Activated CD8-positive, alpha-beta T cell treated with anti-CD3 and anti-CD28 coated beads for 36 hours (primary cell): ENCODE measurements at regions of chr15 and their contacts with region 1.

Region 1: DNA sequence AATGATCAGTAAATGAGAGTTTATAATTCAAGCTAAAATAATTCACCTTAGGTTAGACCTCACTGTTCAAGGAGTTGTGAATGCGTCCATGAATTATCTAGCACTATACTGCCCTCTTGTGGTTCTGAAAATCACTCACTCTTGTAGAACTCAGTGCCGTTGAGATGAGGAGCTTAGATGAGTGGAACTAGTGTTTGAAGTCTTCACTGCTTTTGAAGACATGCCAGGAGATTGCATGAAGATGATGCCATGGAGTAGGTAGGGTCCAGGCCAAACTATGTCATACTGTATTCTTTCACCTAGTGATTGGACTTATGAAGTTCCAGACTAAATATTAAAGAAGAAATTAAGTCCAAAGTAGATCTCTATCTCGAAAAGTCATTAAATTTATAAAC is 28.8 kb downstream of the LYSMD4 start:
- DNase-seq: peak; percentile 30
- ATAC-seq: peak; percentile 72
- H3K4me3 Mint-ChIP-seq: no peak overlapping the region
- H3K27ac Mint-ChIP-seq: no peak overlapping the region
- H3K4me1 Mint-ChIP-seq: peaks cover 47% of the 10 kb centered on the region
- H3K27me3 Mint-ChIP-seq: no peaks in the 10 kb centered on the region
- CTCF ChIP-seq: peak; percentile 77

Region 2: DNA sequence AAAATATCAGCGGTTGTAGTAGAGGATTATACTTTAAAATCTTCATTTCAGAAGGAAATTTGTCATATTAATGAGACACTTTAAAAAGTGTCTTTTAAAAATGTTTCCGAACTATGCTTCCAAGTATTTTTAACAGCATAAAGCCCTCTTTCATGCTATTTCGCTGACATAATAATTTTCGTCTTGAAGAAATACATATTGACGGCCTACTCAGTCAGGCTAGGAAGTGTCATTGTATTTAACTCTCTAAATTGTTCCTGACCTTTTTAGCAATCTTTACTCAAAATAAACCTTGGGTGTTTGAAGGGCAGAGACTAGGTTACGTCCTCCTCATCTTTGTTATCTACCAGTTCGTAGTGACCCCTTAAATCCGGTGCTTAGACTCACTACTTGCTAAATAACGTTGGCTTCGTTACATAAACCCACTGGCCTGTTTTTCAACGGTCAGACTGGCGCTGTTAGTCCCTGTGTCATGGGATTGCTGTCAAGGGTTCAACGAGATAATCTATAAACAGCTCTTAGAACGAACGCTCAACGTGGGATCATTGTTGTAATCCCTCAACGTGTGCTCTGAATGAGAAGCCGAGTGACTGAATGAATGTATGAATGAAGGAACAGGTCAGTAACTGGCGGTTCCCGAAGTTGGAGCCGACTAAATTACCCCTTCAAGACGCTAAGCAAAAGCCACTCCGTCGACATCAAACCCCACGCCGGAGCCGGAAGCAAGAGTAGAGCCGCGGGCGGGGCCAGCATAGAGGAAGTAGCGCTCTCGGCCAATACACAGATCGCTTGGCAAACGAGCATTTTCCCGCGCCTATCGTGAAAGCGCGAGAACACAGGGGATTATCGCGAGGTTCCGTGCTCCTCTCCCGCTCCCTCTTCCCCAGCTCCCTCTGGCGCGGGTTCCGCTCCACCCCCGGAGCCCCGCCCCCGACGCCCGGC is 453.7 kb before region 1 on chr15:
- CTCF ChIA-PET with region 1: interaction called, 13 read pairs
- POLR2A ChIA-PET with region 1: no interaction called
- intact Hi-C with region 1: no loop called
- DNase-seq: peak; percentile 99
- ATAC-seq: peak; percentile 99
- H3K4me3 Mint-ChIP-seq: no peak overlapping the region
- H3K27ac Mint-ChIP-seq: peak overlapping the region; percentile 92
- H3K4me1 Mint-ChIP-seq: peaks cover 26% of the 10 kb centered on the region
- H3K27me3 Mint-ChIP-seq: no peaks in the 10 kb centered on the region
- CTCF ChIP-seq: no peak

Region 3: GRCh38 chr15:99335508-99335907 is 368.9 kb before region 1 on chr15:
- CTCF ChIA-PET with region 1: interaction called, 30 read pairs
- POLR2A ChIA-PET with region 1: no interaction called
- intact Hi-C with region 1: no loop called
- DNase-seq: no peak
- ATAC-seq: no peak
- H3K4me3 Mint-ChIP-seq: no peak overlapping the region
- H3K27ac Mint-ChIP-seq: no peak overlapping the region
- H3K4me1 Mint-ChIP-seq: no peaks in the 10 kb centered on the region
- H3K27me3 Mint-ChIP-seq: no peaks in the 10 kb centered on the region
- CTCF ChIP-seq: no peak

Region 4: DNA sequence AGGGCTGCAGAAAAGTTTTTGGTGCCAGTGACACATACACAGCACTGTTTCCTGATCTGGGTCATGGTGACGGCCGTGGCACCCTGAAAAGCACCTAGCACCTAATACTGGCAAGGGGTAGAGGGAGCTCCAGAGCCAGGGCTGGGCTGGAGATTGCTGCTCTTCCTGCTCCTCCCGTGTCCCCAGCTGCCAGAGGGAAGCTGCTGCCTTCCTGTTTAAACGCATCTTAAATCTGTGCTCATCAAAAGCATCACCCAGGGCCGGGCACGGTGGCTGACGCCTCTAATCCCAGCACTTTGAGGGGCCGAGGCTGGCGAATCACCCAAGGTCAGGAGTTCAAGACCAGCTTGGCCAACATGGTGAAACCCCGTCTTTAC is 295.4 kb before region 1 on chr15:
- CTCF ChIA-PET with region 1: interaction called, 24 read pairs
- POLR2A ChIA-PET with region 1: interaction called, 3 read pairs
- intact Hi-C with region 1: no loop called
- DNase-seq: peak; percentile 51
- ATAC-seq: peak; percentile 74
- H3K4me3 Mint-ChIP-seq: no peak overlapping the region
- H3K27ac Mint-ChIP-seq: no peak overlapping the region
- H3K4me1 Mint-ChIP-seq: peaks cover 4% of the 10 kb centered on the region
- H3K27me3 Mint-ChIP-seq: no peaks in the 10 kb centered on the region
- CTCF ChIP-seq: no peak

Region 5: DNA sequence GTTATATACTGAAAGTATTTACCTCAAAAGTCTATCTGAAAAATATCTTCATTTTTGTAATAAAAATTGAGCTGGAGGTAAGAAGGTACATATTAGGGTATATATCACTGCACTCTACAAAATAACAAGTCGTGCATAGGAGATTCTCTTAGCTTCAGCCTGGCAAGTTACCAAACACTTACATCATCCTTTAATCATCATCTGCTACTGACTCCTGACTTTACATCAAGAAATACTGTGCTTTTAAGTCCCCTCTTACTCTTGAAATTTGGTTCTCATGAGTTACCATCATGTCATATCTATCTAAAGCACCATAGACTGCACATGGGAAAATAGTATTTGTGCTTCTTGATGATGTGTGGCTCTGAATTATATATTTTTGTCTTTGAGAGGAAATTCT is 22.0 kb before region 1 on chr15:
- CTCF ChIA-PET with region 1: interaction called, 11 read pairs
- POLR2A ChIA-PET with region 1: no interaction called
- intact Hi-C with region 1: no loop called
- DNase-seq: no peak
- ATAC-seq: peak; percentile 38
- H3K4me3 Mint-ChIP-seq: no peak overlapping the region
- H3K27ac Mint-ChIP-seq: peak overlapping the region; percentile 47
- H3K4me1 Mint-ChIP-seq: peaks cover 21% of the 10 kb centered on the region
- H3K27me3 Mint-ChIP-seq: no peaks in the 10 kb centered on the region
- CTCF ChIP-seq: no peak

Region 6: GRCh38 chr15:99733268-99734039 is 29.0 kb after region 1 on chr15 and contains the start of gene LYSMD4:
- CTCF ChIA-PET with region 1: interaction called, 18 read pairs
- POLR2A ChIA-PET with region 1: interaction called, 6 read pairs
- intact Hi-C with region 1: no loop called
- DNase-seq: peak; percentile 99
- ATAC-seq: peak; percentile 99
- H3K4me3 Mint-ChIP-seq: peak within 1 kb of the TSS; percentile 79
- H3K27ac Mint-ChIP-seq: peak within 1 kb of the TSS; percentile 94
- H3K4me1 Mint-ChIP-seq: peaks cover 17% of the 10 kb centered on the region
- H3K27me3 Mint-ChIP-seq: no peaks in the 10 kb centered on the region
- CTCF ChIP-seq: no peak
- total RNA-seq, gene LYSMD4: 4.5 to 6.6 TPM